ENCODE measurements at regions of chr10 and their contacts with region 1.

Region 1: DNA sequence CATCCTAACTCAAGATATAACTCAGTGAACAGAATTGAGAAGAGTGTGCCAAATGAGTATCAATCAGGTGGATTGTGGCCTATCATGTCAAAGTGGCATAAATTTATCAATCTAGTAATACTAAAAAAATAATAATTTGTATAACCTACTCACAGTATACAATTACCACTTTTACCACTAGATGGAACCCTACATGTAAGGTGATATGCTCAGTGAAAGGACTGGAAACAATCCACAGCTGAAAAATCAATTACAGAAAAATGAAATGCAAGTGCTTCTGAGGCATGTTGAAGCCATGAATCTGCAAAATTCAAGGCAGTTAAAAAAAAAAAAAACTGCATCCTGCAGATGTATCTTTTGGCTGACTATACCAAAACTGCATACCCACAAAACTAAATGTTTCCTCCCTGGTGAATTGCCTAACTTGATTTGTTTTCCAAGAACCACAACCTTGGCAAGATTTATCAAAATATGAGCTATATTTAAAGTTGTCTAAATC is 13.9 kb downstream of the ARHGAP19 start:
- DNase-seq: peak in 7 of 9 donors; percentile 18 to 65 (median 55)
- ATAC-seq: peak; percentile 91
- H3K4me3 ChIP-seq: no peak overlapping the region
- H3K4me3 Mint-ChIP-seq: no peak overlapping the region
- H3K27ac ChIP-seq: no peak overlapping the region
- H3K27ac Mint-ChIP-seq: peak overlapping the region in 3 of 9 donors; percentile 21 to 59 (median 43)
- H3K4me1 ChIP-seq: no peaks in the 10 kb centered on the region
- H3K4me1 Mint-ChIP-seq: peaks cover 0 to 22% (median 17%) of the 10 kb centered on the region in 7 donors
- H3K27me3 ChIP-seq: no peaks in the 10 kb centered on the region
- H3K27me3 Mint-ChIP-seq: no peaks in the 10 kb centered on the region

Region 2: GRCh38 chr10:97292097-97292862 is 13.7 kb after region 1 on chr10 and contains the start of gene ARHGAP19:
- CTCF ChIA-PET with region 1: interaction called, 5 read pairs
- POLR2A ChIA-PET with region 1: interaction called, 3 read pairs
- intact Hi-C with region 1: loop called in 1 of 2 experiments (anchors 2 kb)
- DNase-seq: peak; percentile 65 to 97 (median 95)
- ATAC-seq: peak; percentile 100
- H3K4me3 ChIP-seq: peak within 1 kb of the TSS; percentile 88
- H3K4me3 Mint-ChIP-seq: peak within 1 kb of the TSS; percentile 83 to 97 (median 95)
- H3K27ac ChIP-seq: peak within 1 kb of the TSS; percentile 83
- H3K27ac Mint-ChIP-seq: peak within 1 kb of the TSS; percentile 32 to 98 (median 92)
- H3K4me1 ChIP-seq: peaks cover 4 to 8% of the 10 kb centered on the region in 2 donors
- H3K4me1 Mint-ChIP-seq: peaks cover 17 to 26% (median 24%) of the 10 kb centered on the region in 7 donors
- H3K27me3 ChIP-seq: no peaks in the 10 kb centered on the region
- H3K27me3 Mint-ChIP-seq: peaks cover 0 to 4% (median 0%) of the 10 kb centered on the region in 5 donors
- total RNA-seq, gene ARHGAP19: 12.8 to 40.1 (median 16.1) TPM

Region 3: GRCh38 chr10:97318772-97319651 is 40.5 kb after region 1 on chr10 and contains the start of gene FRAT1:
- CTCF ChIA-PET with region 1: interaction called, 10 read pairs
- POLR2A ChIA-PET with region 1: interaction called, 6 read pairs
- intact Hi-C with region 1: loop called in 1 of 2 experiments (anchors 2 kb)
- DNase-seq: peak; percentile 87 to 99 (median 95)
- ATAC-seq: peak; percentile 87
- H3K4me3 ChIP-seq: peak within 1 kb of the TSS; percentile 92
- H3K4me3 Mint-ChIP-seq: peak within 1 kb of the TSS; percentile 92 to 99 (median 94)
- H3K27ac ChIP-seq: peak within 1 kb of the TSS; percentile 100
- H3K27ac Mint-ChIP-seq: peak within 1 kb of the TSS; percentile 99 to 100 (median 99)
- H3K4me1 ChIP-seq: peaks cover 12 to 18% of the 10 kb centered on the region in 2 donors
- H3K4me1 Mint-ChIP-seq: peaks cover 20 to 40% (median 29%) of the 10 kb centered on the region in 7 donors
- H3K27me3 ChIP-seq: no peaks in the 10 kb centered on the region
- H3K27me3 Mint-ChIP-seq: peaks cover 0 to 20% (median 0%) of the 10 kb centered on the region in 5 donors
- total RNA-seq, gene FRAT1: 5.3 to 41.0 (median 21.8) TPM

Region 4: GRCh38 chr10:97355571-97355975 is 77.0 kb after region 1 on chr10:
- CTCF ChIA-PET with region 1: interaction called, 83 read pairs
- POLR2A ChIA-PET with region 1: no interaction called
- intact Hi-C with region 1: loop called (anchors 2 kb)
- DNase-seq: peak in 4 of 9 donors; percentile 16 to 25 (median 20)
- ATAC-seq: no peak
- H3K4me3 ChIP-seq: no peak overlapping the region
- H3K4me3 Mint-ChIP-seq: no peak overlapping the region
- H3K27ac ChIP-seq: no peak overlapping the region
- H3K27ac Mint-ChIP-seq: peak overlapping the region in 1 of 9 donors; percentile 11
- H3K4me1 ChIP-seq: no peaks in the 10 kb centered on the region
- H3K4me1 Mint-ChIP-seq: peaks cover 0 to 11% (median 0%) of the 10 kb centered on the region in 7 donors
- H3K27me3 ChIP-seq: no peaks in the 10 kb centered on the region
- H3K27me3 Mint-ChIP-seq: no peaks in the 10 kb centered on the region

Region 5: GRCh38 chr10:97400665-97401454 is 122.3 kb after region 1 on chr10 and contains the start of gene RRP12:
- CTCF ChIA-PET with region 1: interaction called, 3 read pairs
- POLR2A ChIA-PET with region 1: no interaction called
- intact Hi-C with region 1: loop called (anchors 2 to 5 kb)
- DNase-seq: peak; percentile 47 to 96 (median 92)
- ATAC-seq: peak; percentile 96
- H3K4me3 ChIP-seq: peak within 1 kb of the TSS; percentile 73
- H3K4me3 Mint-ChIP-seq: peak within 1 kb of the TSS; percentile 90 to 97 (median 95)
- H3K27ac ChIP-seq: peak within 1 kb of the TSS; percentile 90
- H3K27ac Mint-ChIP-seq: peak within 1 kb of the TSS; percentile 81 to 99 (median 98)
- H3K4me1 ChIP-seq: peaks cover 13 to 15% of the 10 kb centered on the region in 2 donors
- H3K4me1 Mint-ChIP-seq: peaks cover 6 to 22% (median 17%) of the 10 kb centered on the region in 7 donors
- H3K27me3 ChIP-seq: no peaks in the 10 kb centered on the region
- H3K27me3 Mint-ChIP-seq: no peaks in the 10 kb centered on the region
- total RNA-seq, gene RRP12: 22.0 to 197 (median 32.3) TPM

Measured in naive thymus-derived CD4-positive, alpha-beta T cell (primary cell).